PC-3 (cell line): ENCODE measurements at regions of chr2 and their contacts with region 1.

Region 1: DNA sequence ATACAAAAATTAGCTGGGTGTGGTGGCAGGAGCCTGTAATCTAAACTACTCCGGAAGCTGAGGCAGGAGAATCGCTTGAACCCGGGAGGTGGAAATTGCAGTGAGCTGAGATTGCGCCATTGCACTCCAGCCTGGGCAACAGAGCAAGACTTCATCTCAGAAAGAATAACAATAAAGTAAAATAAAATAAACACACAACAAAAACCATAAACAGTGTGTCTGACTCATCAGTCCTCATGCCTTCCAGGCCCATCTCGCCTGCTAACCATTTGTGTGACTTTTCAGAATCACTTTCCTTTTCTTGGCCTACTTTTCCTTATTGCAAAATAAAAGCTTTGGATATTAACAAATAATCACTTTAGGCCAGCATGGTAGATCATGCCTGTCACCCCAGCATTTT is 42.0 kb upstream of the ASXL2 start:
- DNase-seq: no peak
- ATAC-seq: no peak
- H3K4me3 ChIP-seq: no peak overlapping the region
- H3K27ac ChIP-seq: no peak overlapping the region
- H3K4me1 ChIP-seq: no peaks in the 10 kb centered on the region
- H3K27me3 ChIP-seq: no peaks in the 10 kb centered on the region
- CTCF ChIP-seq: no peak

Region 2: GRCh38 chr2:25982273-25982967 is 62.1 kb after region 1 on chr2 and contains the start of gene KIF3C:
- CTCF ChIA-PET with region 1: no interaction called
- POLR2A ChIA-PET with region 1: interaction called, 13 read pairs
- intact Hi-C with region 1: no loop called
- DNase-seq: peak; percentile 64
- ATAC-seq: peak; percentile 72
- H3K4me3 ChIP-seq: peak within 1 kb of the TSS; percentile 88
- H3K27ac ChIP-seq: 0 out of 2 replicates have a peak within 1 kb of the TSS, but pooled peaks have one; percentile 3
- H3K4me1 ChIP-seq: peaks cover 30% of the 10 kb centered on the region
- H3K27me3 ChIP-seq: no peaks in the 10 kb centered on the region
- CTCF ChIP-seq: no peak
- total RNA-seq, gene KIF3C: 12.8 and 20.1 TPM in 2 replicates